ENCODE measurements at regions of chr20 and their contacts with region 1.

Region 1: DNA sequence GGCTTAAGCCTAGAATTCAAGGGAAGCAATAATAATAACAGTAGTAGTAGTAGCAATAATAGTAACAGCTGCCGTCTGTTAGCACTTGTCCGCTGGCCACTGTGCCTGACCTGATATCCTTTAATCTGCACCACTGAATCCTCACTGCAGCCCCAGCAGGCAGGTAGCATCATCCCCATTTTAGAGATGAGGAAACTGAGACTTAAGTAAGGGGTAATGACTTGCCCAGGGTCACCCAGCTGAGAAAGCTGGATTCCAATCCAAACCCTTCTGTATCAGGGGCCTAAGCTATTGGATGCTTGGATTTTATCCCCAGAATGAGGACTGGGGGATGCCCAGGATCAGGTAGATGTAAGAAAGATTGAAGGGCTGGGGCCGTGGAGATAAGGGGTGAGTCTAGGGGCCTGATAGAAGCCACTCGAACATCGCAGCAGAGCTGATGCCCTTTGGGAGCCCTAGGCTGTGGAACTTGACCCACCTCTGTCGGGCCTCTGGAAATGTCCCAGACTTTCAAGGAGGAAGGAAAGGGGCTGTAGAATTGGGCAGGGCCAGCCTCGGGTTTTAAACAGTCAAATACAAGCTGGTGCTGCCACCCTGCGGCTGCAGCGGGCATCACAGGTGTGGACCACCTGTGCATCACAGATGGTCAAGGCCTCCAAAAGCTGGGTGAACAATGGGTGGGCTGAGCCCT is 102.1 kb upstream of the MYL9 start:
- DNase-seq: peak; percentile 62 to 87 (median 78)
- ATAC-seq: peak; percentile 42 to 60
- H3K4me3 ChIP-seq: no peak overlapping the region
- H3K27ac ChIP-seq: no peak overlapping the region
- H3K4me1 ChIP-seq: no peaks in the 10 kb centered on the region
- H3K27me3 ChIP-seq: no peaks in the 10 kb centered on the region

Region 2: GRCh38 chr20:36199345-36200257 is 239.6 kb before region 1 on chr20:
- intact Hi-C with region 1: loop called in 3 of 4 experiments (anchors 5 kb)
- DNase-seq: peak; percentile 72 to 89 (median 79)
- ATAC-seq: peak; percentile 71
- H3K4me3 ChIP-seq: no peak overlapping the region
- H3K27ac ChIP-seq: no peak overlapping the region
- H3K4me1 ChIP-seq: no peaks in the 10 kb centered on the region
- H3K27me3 ChIP-seq: no peaks in the 10 kb centered on the region

Region 3: GRCh38 chr20:36214684-36215256 is 224.4 kb before region 1 on chr20:
- intact Hi-C with region 1: loop called in 1 of 4 experiments (anchors 10 kb)
- DNase-seq: no peak
- ATAC-seq: peak in 1 of 2 donors; percentile 36
- H3K4me3 ChIP-seq: no peak overlapping the region
- H3K27ac ChIP-seq: no peak overlapping the region
- H3K4me1 ChIP-seq: no peaks in the 10 kb centered on the region
- H3K27me3 ChIP-seq: no peaks in the 10 kb centered on the region

Region 4: DNA sequence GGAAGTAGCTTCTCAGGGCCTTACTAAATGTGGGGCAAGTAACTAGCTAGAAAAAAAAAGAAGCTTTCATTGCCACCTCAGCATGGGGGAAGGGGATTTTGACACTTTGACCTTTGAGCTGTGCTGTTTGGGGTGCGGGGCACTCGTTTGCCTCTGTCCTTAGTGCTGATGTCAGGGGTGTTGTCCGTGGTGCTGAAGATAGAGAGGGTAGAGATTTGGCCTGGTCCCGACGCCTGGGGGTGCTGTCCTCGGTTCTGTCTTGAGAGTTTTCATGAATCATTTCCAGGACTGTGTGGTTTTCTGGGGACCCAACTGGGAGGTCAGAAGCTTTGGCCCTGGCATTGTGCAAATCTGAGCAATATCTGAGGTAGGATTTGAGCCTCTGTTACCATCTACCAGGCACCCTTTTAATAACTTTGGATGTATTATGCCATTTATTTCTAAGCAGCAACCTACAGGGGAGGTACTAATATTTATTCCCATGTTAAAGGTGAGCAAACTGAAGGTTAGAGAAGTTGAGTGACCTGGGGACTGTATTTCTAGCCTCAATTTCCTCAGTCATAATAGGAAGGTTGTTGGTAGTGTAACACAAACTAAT is 55.1 kb before region 1 on chr20:
- intact Hi-C with region 1: no loop called
- DNase-seq: no peak
- ATAC-seq: no peak
- H3K4me3 ChIP-seq: no peak overlapping the region
- H3K27ac ChIP-seq: no peak overlapping the region
- H3K4me1 ChIP-seq: no peaks in the 10 kb centered on the region
- H3K27me3 ChIP-seq: no peaks in the 10 kb centered on the region

Region 5: GRCh38 chr20:36472637-36473081 is 33.5 kb after region 1 on chr20:
- intact Hi-C with region 1: no loop called
- DNase-seq: peak; percentile 67 to 87 (median 79)
- ATAC-seq: peak; percentile 79
- H3K4me3 ChIP-seq: no peak overlapping the region
- H3K27ac ChIP-seq: peak overlapping the region; percentile 82
- H3K4me1 ChIP-seq: peaks cover 39% of the 10 kb centered on the region
- H3K27me3 ChIP-seq: no peaks in the 10 kb centered on the region

Measured in right cardiac atrium (tissue), 5 donors.